HepG2 (cell line): ENCODE measurements at regions of chr14 and their contacts with region 1.

Region 1: GRCh38 chr14:23068476-23069412 is 11.4 kb upstream of the CDH24 start:
- DNase-seq: peak; percentile 98
- ATAC-seq: peak; percentile 79
- H3K4me3 ChIP-seq: no peak overlapping the region
- H3K27ac ChIP-seq: peak overlapping the region; percentile 5
- H3K4me1 ChIP-seq: peaks cover 42% of the 10 kb centered on the region
- H3K27me3 ChIP-seq: no peaks in the 10 kb centered on the region; a peak in 1 of 5 replicates
- CTCF ChIP-seq: peak; percentile 99
- EP300 ChIP-seq: no peak; a peak in 1 of 4 replicates
- POLR2A ChIP-seq: peak in 1 of 2 experiments; percentile 24; a peak in 2 of 4 replicates
- RAD21 ChIP-seq: peak; percentile 94

Region 2: DNA sequence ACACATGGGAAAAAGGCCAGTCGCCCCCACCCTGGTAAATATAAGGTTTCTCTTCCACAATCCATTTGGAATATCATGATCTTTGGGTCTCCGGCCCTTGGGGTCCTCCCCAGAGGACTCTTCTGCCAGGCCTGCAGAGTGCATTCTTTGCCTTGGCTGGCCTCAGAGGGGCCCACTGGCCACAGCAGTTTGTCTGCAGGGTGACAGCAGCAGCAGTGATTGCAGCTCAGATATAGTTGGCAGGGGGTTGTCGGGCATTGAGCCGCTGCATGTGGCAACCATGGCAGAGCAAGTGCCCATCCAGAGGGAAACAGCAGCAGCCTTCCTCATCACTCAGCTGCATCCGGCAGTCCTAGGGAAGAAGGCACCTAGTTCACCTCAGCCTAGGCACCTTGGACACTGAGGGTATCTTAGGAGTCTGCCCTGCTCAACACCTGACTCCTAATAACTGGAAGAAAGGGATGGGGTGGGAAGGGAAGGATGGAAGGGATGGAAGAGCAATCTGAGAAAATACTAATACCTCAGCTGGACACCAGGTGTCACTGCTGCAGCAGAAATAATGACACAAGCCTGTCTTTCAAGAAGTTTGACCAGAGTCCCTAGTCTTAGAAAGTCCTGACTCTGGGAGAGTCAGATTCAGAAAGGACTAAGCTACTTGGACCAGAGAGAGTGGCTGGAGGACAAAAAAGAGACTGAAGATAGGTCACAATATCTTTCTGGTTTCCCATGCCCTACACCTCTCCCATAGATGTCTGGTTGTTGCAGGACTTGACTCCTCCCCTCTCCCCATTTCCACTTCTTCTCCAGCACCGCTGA is 95.3 kb before region 1 on chr14:
- CTCF ChIA-PET with region 1: interaction called, 4 read pairs
- POLR2A ChIA-PET with region 1: interaction called, 30 read pairs
- in situ Hi-C with region 1: no loop called
- intact Hi-C with region 1: no loop called
- DNase-seq: peak; percentile 82
- ATAC-seq: no peak
- H3K4me3 ChIP-seq: no peak overlapping the region
- H3K27ac ChIP-seq: peak overlapping the region; percentile 97
- H3K4me1 ChIP-seq: peaks cover 65% of the 10 kb centered on the region
- H3K27me3 ChIP-seq: no peaks in the 10 kb centered on the region
- CTCF ChIP-seq: no peak
- EP300 ChIP-seq: no peak
- POLR2A ChIP-seq: peak in 1 of 2 experiments; percentile 73; a peak in 2 of 4 replicates
- RAD21 ChIP-seq: peak; percentile 97

Region 3: GRCh38 chr14:23057757-23058653 is 10.7 kb before region 1 on chr14:
- CTCF ChIA-PET with region 1: interaction called, 28 read pairs
- POLR2A ChIA-PET with region 1: interaction called, 44 read pairs
- in situ Hi-C with region 1: no loop called
- intact Hi-C with region 1: no loop called
- DNase-seq: peak; percentile 92
- ATAC-seq: peak; percentile 71
- H3K4me3 ChIP-seq: peak overlapping the region; percentile 55 to 88 (median 64)
- H3K27ac ChIP-seq: no peak overlapping the region
- H3K4me1 ChIP-seq: peaks cover 29% of the 10 kb centered on the region
- H3K27me3 ChIP-seq: peaks cover 0 to 6% of the 10 kb centered on the region in 2 experiments; a peak in 1 of 5 replicates
- CTCF ChIP-seq: peak; percentile 100
- EP300 ChIP-seq: peak in 1 of 2 experiments; percentile 66; a peak in 1 of 4 replicates
- POLR2A ChIP-seq: peak in 1 of 2 experiments; percentile 39; a peak in 1 of 4 replicates
- RAD21 ChIP-seq: peak; percentile 98

Region 4: DNA sequence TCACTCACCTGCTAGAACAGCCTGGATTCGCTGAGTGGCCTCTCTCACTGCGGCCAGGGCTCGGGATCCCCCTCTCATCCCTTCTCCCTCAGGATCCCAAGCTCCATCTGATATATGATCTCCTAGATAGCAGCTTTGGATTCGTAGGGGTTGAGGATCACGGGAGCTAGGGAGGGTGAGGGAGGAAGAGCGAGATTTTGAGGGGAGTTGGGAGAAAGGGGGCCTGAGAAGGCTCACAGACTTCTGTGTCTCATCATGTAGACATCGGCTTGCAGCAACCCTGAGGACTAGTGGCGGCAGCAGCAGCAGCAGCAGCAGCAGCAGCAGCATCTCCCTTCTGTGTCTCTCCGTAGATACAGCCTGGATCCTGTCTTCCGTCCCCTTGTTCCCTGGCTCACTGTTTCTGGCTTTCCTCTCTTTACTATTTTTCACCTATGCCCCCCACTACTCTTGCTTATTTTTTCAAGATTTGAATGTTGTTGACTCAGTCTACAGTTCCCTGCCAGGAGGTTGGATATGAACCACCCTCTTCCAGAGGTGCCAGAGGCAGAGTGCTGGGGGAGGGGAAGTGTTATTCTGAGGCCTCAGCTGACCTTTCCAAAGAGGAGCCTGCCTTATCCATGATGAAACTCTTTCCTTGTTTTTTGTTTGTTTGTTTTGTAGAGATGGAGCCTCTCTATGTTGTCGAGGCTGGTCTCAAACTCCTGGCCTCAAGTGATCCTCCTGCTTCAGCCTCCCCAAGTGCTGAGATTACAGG is 36.0 kb after region 1 on chr14 and contains the start of gene CIROP:
- CTCF ChIA-PET with region 1: interaction called, 30 read pairs
- POLR2A ChIA-PET with region 1: interaction called, 3 read pairs
- in situ Hi-C with region 1: loop called (anchors 5 kb)
- intact Hi-C with region 1: loop called (anchors 1 kb)
- DNase-seq: no peak
- ATAC-seq: peak; percentile 73
- H3K4me3 ChIP-seq: peak within 1 kb of the TSS in 2 of 3 experiments; percentile 15 to 44; a peak in 4 of 6 replicates
- H3K27ac ChIP-seq: no peak within 1 kb of the TSS
- H3K4me1 ChIP-seq: peaks cover 40% of the 10 kb centered on the region
- H3K27me3 ChIP-seq: peaks cover 8 to 49% of the 10 kb centered on the region in 2 experiments
- CTCF ChIP-seq: no peak
- EP300 ChIP-seq: no peak
- POLR2A ChIP-seq: no peak
- RAD21 ChIP-seq: no peak
- total RNA-seq, gene CIROP: not detected in 2 replicates

Region 5: GRCh38 chr14:23114669-23115491 is 46.1 kb after region 1 on chr14:
- CTCF ChIA-PET with region 1: interaction called, 30 read pairs
- POLR2A ChIA-PET with region 1: interaction called, 8 read pairs
- in situ Hi-C with region 1: no loop called
- intact Hi-C with region 1: no loop called
- DNase-seq: peak; percentile 52
- ATAC-seq: peak; percentile 7
- H3K4me3 ChIP-seq: no peak overlapping the region
- H3K27ac ChIP-seq: no peak overlapping the region
- H3K4me1 ChIP-seq: peaks cover 46% of the 10 kb centered on the region
- H3K27me3 ChIP-seq: peaks cover 53 to 98% of the 10 kb centered on the region in 2 experiments
- CTCF ChIP-seq: no peak
- EP300 ChIP-seq: no peak
- POLR2A ChIP-seq: no peak
- RAD21 ChIP-seq: no peak

Region 6: GRCh38 chr14:23186913-23187654 is 118.3 kb after region 1 on chr14:
- CTCF ChIA-PET with region 1: interaction called, 34 read pairs
- POLR2A ChIA-PET with region 1: interaction called, 4 read pairs
- in situ Hi-C with region 1: no loop called
- intact Hi-C with region 1: loop called (anchors 2 kb)
- DNase-seq: peak; percentile 78
- ATAC-seq: peak; percentile 89
- H3K4me3 ChIP-seq: no peak overlapping the region
- H3K27ac ChIP-seq: no peak overlapping the region
- H3K4me1 ChIP-seq: peaks cover 12% of the 10 kb centered on the region
- H3K27me3 ChIP-seq: peaks cover 2 to 34% of the 10 kb centered on the region in 2 experiments
- CTCF ChIP-seq: peak; percentile 94
- EP300 ChIP-seq: no peak
- POLR2A ChIP-seq: no peak
- RAD21 ChIP-seq: peak; percentile 93